ENCODE measurements at regions of chr14 and their contacts with region 1.

Region 1: GRCh38 chr14:91277546-91278382 is 33.3 kb upstream of the GPR68 start:
- DNase-seq: no peak
- H3K4me3 ChIP-seq: no peak overlapping the region
- H3K27ac ChIP-seq: no peak overlapping the region
- H3K4me1 ChIP-seq: no peaks in the 10 kb centered on the region
- H3K27me3 ChIP-seq: no peaks in the 10 kb centered on the region
- CTCF ChIP-seq: no peak
- EP300 ChIP-seq: no peak
- POLR2A ChIP-seq: no peak
- RAD21 ChIP-seq: peak in 1 of 2 experiments; percentile 11; a peak in 1 of 4 replicates

Region 2: GRCh38 chr14:91258011-91258618 is 19.6 kb before region 1 on chr14:
- CTCF ChIA-PET with region 1: interaction called, 12 read pairs
- POLR2A ChIA-PET with region 1: interaction called, 3 read pairs
- DNase-seq: no peak
- H3K4me3 ChIP-seq: no peak overlapping the region
- H3K27ac ChIP-seq: no peak overlapping the region
- H3K4me1 ChIP-seq: peaks cover 0 to 5% (median 4%) of the 10 kb centered on the region in 4 experiments; a peak in 5 of 7 replicates
- H3K27me3 ChIP-seq: peaks cover 0 to 10% (median 7%) of the 10 kb centered on the region in 4 experiments; a peak in 6 of 7 replicates
- CTCF ChIP-seq: no peak
- EP300 ChIP-seq: no peak
- POLR2A ChIP-seq: no peak
- RAD21 ChIP-seq: no peak

Region 3: DNA sequence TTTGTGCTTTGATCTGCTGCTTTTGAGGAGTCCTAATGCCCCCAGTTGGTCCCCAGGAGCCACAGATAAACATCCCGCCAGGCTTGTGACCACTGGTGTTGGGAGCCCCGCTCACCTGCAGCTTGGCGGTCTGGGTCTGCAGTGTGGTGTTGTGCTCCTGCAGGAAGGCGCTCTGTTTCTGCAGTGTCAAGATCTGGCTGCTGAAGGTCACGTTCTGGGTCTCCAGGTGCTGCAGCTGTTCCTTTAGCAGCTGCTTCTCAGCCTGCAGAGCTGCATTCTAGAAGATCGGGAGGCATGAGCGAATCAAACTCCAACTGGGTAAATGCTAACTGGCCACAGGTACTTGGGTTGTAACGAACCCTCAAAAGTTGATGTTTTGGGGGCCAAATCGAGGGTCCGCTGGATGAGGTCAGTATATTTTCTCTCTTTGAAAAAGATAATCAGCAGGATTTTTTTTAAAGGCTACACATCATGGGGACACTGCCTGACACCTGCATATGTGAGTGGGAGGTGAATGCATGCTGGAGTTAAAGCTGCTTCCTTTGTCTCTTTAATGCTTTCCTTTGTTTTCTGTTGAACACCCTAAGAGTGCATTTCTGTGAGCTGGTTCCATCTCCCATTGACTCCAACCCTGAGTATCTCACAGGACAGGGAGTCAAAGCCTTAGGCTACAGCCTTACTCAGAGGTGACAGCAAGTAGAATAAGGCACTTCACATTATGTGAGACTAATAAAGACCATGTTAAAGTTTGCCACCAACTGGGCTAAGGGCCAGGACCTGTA is 28.1 kb after region 1 on chr14:
- CTCF ChIA-PET with region 1: no interaction called
- POLR2A ChIA-PET with region 1: no interaction called
- DNase-seq: no peak
- H3K4me3 ChIP-seq: peak overlapping the region in 1 of 4 experiments; percentile 12; a peak in 2 of 8 replicates
- H3K27ac ChIP-seq: peak overlapping the region; percentile 25; the same call in 1 of the 2 replicates
- H3K4me1 ChIP-seq: peaks cover 7 to 31% (median 23%) of the 10 kb centered on the region in 4 experiments; a peak in 6 of 7 replicates
- H3K27me3 ChIP-seq: no peaks in the 10 kb centered on the region
- CTCF ChIP-seq: no peak
- EP300 ChIP-seq: 0 out of 3 replicates have a peak, but pooled peaks of 1 of the 2 experiments have one; percentile 24
- POLR2A ChIP-seq: no peak
- RAD21 ChIP-seq: no peak

Measured in H1 (cell line).